ENCODE measurements at regions of chr10 and their contacts with region 1.

Region 1: DNA sequence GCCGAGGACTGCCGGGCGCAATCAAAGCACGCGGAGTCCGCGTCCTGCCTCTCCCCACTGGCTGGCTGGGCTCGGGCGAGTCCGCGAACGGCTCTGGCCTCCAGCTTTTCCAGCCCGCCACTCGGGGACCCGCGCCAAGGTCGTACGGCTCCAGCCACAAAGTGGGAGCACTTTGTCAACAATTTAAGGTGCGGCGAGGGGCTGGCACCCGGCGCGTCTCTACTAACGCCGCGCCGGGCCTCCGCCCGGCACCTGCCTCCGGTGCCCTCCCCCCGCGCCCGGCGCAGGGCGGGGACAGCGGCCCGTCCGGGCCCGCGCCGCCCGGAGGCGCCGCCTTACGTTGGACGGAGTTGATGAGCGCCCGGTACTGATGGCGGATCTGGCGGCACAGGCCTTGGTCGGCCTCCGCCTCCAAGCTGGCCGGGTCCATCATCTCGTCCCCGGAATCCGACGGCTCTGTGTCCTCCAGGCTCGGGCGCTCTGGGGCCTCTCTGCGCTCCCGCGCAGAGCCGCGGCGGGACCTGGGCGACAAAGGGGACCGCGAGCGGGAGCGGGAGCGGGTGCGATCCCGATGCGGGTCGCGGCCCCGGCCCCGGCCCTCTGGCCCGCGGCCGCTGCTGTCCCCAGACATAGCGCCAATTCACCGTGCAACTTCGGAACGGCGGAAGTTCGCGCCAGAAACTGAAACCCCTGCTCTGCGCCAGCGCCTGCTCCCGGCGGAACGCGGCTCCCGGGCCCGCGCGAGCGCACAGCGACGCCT is at the start of gene NSMCE4A:
- DNase-seq: peak; percentile 94
- total RNA-seq, gene NSMCE4A: 41.2 to 48.0 TPM

Region 2: GRCh38 chr10:121927841-121928527 is 46.7 kb before region 1 on chr10 and contains the start of gene ATE1:
- intact Hi-C with region 1: loop called in 1 of 2 experiments (anchors 5 kb)
- DNase-seq: peak; percentile 96
- total RNA-seq, gene ATE1: 25.6 to 32.4 TPM